ENCODE measurements at regions of chr2 and their contacts with region 1.

Region 1: DNA sequence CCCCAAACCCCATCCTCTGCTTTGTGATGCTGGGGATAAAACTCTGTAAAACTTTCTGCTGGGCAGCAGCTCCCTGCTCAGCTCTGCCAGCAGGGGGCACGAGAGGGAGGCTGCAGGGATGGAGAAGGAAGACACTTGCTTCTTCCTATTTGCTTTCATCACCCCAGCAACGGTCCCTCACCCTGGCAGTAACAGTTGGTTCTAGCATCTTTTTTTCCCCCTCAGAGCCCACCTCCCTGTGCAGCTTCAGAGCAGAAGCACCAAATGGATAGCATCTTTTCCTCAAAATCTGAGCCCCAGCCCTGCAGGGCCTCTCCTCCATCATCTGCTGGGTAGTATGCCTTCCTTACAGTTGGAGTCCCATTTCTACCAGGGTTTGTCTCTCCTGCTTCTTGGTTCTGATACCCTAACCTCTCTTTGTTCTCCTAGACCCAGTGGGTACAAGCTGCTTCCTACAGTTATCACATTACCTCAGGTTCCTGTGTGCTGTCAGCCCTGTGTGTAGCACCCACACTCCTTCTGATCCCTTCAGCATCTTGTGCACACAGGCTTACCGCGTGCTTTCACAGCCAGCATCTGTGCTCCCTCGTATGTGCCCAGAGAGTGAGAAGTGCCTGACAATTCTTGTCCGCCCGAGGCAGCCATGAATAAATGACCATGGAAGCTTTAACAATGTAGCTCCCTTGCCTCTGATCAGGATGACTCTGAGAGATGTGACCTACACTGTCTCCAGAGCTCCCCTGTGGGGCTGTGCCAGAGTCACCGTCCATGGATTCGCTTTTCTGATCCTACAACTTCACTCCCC is 14.5 kb downstream of the CKAP2L start:
- DNase-seq: peak; percentile 74 to 79 (median 77)
- H3K4me3 ChIP-seq: peak overlapping the region in 1 of 2 donors; percentile 23
- H3K4me3 Mint-ChIP-seq: peak overlapping the region; percentile 53 to 84 (median 68)
- H3K27ac ChIP-seq: peak overlapping the region; percentile 22
- H3K27ac Mint-ChIP-seq: peak overlapping the region; percentile 32 to 89 (median 82)
- H3K4me1 ChIP-seq: peaks cover 9% of the 10 kb centered on the region
- H3K4me1 Mint-ChIP-seq: peaks cover 8 to 32% (median 17%) of the 10 kb centered on the region in 4 donors
- H3K27me3 ChIP-seq: no peaks in the 10 kb centered on the region
- H3K27me3 Mint-ChIP-seq: no peaks in the 10 kb centered on the region

Region 2: GRCh38 chr2:112737542-112738232 is 12.3 kb before region 1 on chr2:
- CTCF ChIA-PET with region 1: interaction called, 19 read pairs
- POLR2A ChIA-PET with region 1: no interaction called
- intact Hi-C with region 1: no loop called
- DNase-seq: no peak
- H3K4me3 ChIP-seq: no peak overlapping the region
- H3K4me3 Mint-ChIP-seq: no peak overlapping the region
- H3K27ac ChIP-seq: no peak overlapping the region
- H3K27ac Mint-ChIP-seq: no peak overlapping the region
- H3K4me1 ChIP-seq: no peaks in the 10 kb centered on the region
- H3K4me1 Mint-ChIP-seq: no peaks in the 10 kb centered on the region
- H3K27me3 ChIP-seq: no peaks in the 10 kb centered on the region
- H3K27me3 Mint-ChIP-seq: peaks cover 0 to 2% of the 10 kb centered on the region in 2 donors

Region 3: DNA sequence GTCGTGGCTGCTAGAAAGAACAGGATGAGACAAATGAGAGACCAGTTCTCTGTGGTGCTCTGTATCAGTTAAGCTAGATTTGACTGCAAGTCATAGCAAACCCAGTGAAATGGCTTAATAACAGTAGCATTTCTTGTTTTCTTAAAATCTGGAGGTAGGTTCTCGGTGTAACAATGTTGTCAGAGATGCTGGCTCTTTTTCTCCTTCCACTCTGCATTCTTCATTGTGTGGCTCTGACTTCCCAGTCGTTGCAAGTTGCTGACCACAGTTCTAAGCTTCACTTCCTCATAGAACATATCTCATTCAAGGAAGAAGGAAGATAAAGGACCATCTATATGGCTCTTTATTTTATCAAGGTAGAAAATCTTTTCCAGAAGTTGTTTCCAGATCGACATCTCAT is 22.4 kb after region 1 on chr2:
- CTCF ChIA-PET with region 1: interaction called, 21 read pairs
- POLR2A ChIA-PET with region 1: interaction called, 6 read pairs
- intact Hi-C with region 1: no loop called
- DNase-seq: no peak
- H3K4me3 ChIP-seq: no peak overlapping the region
- H3K4me3 Mint-ChIP-seq: no peak overlapping the region
- H3K27ac ChIP-seq: no peak overlapping the region
- H3K27ac Mint-ChIP-seq: no peak overlapping the region
- H3K4me1 ChIP-seq: peaks cover 16% of the 10 kb centered on the region
- H3K4me1 Mint-ChIP-seq: peaks cover 19 to 38% (median 24%) of the 10 kb centered on the region in 4 donors
- H3K27me3 ChIP-seq: no peaks in the 10 kb centered on the region
- H3K27me3 Mint-ChIP-seq: no peaks in the 10 kb centered on the region

Region 4: GRCh38 chr2:112884869-112885505 is 135.0 kb after region 1 on chr2:
- CTCF ChIA-PET with region 1: interaction called, 249 read pairs
- POLR2A ChIA-PET with region 1: interaction called, 21 read pairs
- intact Hi-C with region 1: loop called (anchors 1 kb)
- DNase-seq: peak; percentile 55 to 65 (median 60)
- H3K4me3 ChIP-seq: no peak overlapping the region
- H3K4me3 Mint-ChIP-seq: peak overlapping the region in 2 of 8 donors; percentile 7 to 12
- H3K27ac ChIP-seq: no peak overlapping the region
- H3K27ac Mint-ChIP-seq: peak overlapping the region in 3 of 7 donors; percentile 6 to 23 (median 20)
- H3K4me1 ChIP-seq: no peaks in the 10 kb centered on the region
- H3K4me1 Mint-ChIP-seq: peaks cover 3 to 11% (median 8%) of the 10 kb centered on the region in 4 donors
- H3K27me3 ChIP-seq: no peaks in the 10 kb centered on the region
- H3K27me3 Mint-ChIP-seq: no peaks in the 10 kb centered on the region

Region 5: DNA sequence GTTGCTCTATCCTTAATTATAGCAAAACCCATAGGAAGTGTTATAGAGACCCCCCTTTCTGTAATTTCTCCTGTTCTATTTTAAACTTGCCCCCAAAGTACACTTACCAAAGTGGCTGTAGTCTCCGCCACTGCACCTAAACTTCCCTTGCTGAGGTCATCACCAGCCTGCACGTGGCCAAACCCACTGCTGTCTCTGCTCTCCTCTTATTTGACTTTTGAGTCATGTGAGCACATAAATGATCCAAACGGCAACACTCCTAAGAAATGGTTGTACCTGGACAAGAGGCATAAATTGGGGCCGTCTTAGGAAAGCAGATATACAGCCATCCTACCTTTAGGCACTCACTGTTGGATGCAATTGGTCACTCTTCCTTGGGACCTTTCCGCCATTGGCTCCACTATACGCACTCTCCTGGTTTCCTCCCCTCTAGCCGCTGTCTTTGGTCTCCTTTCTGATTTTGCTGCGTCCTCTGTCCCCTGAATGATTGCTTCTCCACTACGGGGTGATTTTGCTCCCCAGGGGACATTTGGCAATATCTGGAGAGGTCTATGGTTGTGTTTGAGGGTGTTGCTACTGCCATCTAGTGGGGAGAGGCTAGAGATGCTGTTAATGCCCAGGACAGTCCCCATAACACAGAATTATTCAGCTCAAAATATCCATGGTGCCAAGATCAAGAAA is 208.6 kb after region 1 on chr2:
- CTCF ChIA-PET with region 1: interaction called, 14 read pairs
- POLR2A ChIA-PET with region 1: no interaction called
- intact Hi-C with region 1: no loop called
- DNase-seq: peak in 4 of 5 donors; percentile 35 to 53 (median 52)
- H3K4me3 ChIP-seq: no peak overlapping the region
- H3K4me3 Mint-ChIP-seq: no peak overlapping the region
- H3K27ac ChIP-seq: no peak overlapping the region
- H3K27ac Mint-ChIP-seq: no peak overlapping the region
- H3K4me1 ChIP-seq: no peaks in the 10 kb centered on the region
- H3K4me1 Mint-ChIP-seq: no peaks in the 10 kb centered on the region
- H3K27me3 ChIP-seq: no peaks in the 10 kb centered on the region
- H3K27me3 Mint-ChIP-seq: peaks cover 5 to 10% of the 10 kb centered on the region in 2 donors

Region 6: DNA sequence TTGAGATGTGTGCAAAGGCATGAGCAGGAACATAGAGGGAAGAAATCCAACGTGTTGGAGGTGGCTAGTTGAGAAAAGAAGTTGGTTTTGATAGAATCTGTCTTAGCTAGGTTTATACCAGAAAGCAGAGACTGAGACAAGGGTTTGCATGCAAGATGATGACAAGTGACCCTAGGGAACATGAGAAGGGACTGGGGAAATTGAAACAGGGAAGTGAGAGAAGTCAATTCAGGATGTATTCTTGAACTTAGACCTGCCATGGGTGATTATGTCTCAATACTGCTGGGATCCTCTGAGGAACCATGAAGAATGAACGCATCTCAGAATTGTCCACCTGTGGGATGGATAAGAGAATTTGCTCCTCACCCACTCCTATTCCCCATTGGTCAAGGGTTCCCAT is 275.8 kb after region 1 on chr2:
- CTCF ChIA-PET with region 1: no interaction called
- POLR2A ChIA-PET with region 1: no interaction called
- intact Hi-C with region 1: no loop called
- DNase-seq: no peak
- H3K4me3 ChIP-seq: no peak overlapping the region
- H3K4me3 Mint-ChIP-seq: no peak overlapping the region
- H3K27ac ChIP-seq: no peak overlapping the region
- H3K27ac Mint-ChIP-seq: no peak overlapping the region
- H3K4me1 ChIP-seq: no peaks in the 10 kb centered on the region
- H3K4me1 Mint-ChIP-seq: peaks cover 0 to 2% (median 0%) of the 10 kb centered on the region in 4 donors
- H3K27me3 ChIP-seq: no peaks in the 10 kb centered on the region
- H3K27me3 Mint-ChIP-seq: peaks cover 13 to 19% of the 10 kb centered on the region in 2 donors

Region 7: DNA sequence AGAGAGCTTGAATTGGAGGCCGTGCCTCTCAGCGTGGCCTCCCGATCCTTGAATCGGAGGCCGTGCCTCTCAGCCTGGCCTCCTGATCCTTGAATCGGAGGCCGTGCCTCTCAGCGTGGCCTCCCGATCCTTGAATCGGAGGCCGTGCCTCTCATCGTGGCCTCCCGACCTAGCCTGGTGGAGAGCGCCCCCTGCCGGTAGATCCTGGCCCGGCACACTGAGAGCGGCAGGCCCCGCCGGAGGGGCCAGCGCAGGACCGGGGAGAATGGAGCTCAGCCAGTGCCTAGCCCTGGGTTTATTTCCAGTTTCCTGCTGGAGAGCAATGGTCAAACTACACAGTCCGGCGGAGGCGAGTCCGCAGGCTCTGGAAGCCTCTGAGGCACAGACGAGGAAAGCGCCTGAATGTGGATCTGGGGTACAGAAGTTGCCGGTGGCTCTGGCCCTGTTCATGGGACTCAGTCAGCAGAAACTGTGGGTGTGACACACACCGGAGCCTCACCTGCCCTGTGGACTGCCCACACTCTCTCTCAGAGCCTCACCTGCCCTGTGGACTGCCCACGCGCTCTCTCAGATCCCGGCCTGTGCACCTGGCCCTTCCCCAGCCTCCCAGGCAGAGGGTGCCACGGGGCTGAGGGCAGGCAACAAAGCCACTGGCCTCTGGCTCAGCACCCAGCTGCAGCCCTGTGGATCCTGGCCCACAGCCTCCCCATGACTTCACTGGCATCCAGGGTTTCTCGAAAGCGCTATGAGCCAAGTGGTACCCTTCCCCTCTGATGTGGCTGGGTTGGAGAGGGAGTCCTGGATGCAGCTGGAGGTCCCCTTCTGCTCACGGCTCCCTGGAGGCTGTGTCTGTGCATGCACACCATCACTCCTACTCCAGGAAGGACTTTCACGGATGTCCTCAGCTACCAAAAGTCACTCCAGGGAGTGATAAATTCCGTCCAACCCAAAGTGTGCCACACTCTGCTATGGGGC is 301.3 kb after region 1 on chr2:
- CTCF ChIA-PET with region 1: no interaction called
- POLR2A ChIA-PET with region 1: no interaction called
- intact Hi-C with region 1: no loop called
- DNase-seq: no peak
- H3K4me3 ChIP-seq: no peak overlapping the region
- H3K4me3 Mint-ChIP-seq: no peak overlapping the region
- H3K27ac ChIP-seq: no peak overlapping the region
- H3K27ac Mint-ChIP-seq: no peak overlapping the region
- H3K4me1 ChIP-seq: no peaks in the 10 kb centered on the region
- H3K4me1 Mint-ChIP-seq: no peaks in the 10 kb centered on the region
- H3K27me3 ChIP-seq: no peaks in the 10 kb centered on the region
- H3K27me3 Mint-ChIP-seq: peaks cover 6% of the 10 kb centered on the region in 2 donors